ENCODE measurements at regions of chr12 and their contacts with region 1.

Region 1: DNA sequence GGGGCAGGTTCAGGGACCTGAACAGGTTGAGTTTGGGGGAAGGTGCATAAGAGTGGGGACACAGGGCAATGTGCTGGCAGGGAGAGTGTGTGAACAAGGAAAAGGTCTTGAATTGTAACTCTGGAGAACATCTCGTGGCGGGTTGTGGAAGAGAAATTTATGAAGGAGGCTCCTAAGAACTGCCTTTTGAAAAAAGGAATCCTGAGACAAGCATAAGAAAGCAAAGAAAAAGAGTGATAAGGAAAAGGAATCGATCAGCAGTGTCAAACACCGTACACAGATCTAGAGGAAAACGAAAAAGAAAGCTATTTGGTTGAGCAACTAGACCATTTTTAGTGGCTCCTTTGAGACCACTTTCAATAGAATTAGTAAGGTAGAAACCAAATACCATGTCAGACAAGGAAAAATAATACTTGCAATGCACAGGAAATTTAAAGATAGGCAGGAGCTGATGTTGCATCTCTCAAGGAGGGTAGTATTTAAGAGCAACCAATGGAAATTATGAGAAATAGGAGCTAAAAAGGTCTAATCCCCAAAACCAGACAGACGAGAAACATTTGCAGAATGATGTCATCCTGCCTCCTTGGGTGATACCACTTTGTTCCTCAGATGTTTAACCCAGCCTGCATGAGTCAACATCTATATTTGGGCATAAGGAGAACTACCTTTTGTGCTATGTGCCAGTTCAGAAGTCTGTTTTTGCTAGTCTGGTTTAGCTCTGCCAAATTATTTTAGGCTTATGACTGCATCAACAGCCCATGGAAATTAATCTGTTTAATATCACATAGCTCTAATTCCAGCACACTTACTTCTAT is 64.5 kb upstream of the STK38L start:
- DNase-seq: peak; percentile 76
- H3K4me3 ChIP-seq: no peak overlapping the region
- H3K27ac ChIP-seq: no peak overlapping the region
- H3K27me3 ChIP-seq: no peaks in the 10 kb centered on the region
- CTCF ChIP-seq: no peak

Region 2: GRCh38 chr12:27094726-27095125 is 84.9 kb before region 1 on chr12:
- CTCF ChIA-PET with region 1: no interaction called
- POLR2A ChIA-PET with region 1: no interaction called
- DNase-seq: no peak
- H3K4me3 ChIP-seq: no peak overlapping the region
- H3K27ac ChIP-seq: no peak overlapping the region
- H3K27me3 ChIP-seq: no peaks in the 10 kb centered on the region
- CTCF ChIP-seq: no peak

Region 3: DNA sequence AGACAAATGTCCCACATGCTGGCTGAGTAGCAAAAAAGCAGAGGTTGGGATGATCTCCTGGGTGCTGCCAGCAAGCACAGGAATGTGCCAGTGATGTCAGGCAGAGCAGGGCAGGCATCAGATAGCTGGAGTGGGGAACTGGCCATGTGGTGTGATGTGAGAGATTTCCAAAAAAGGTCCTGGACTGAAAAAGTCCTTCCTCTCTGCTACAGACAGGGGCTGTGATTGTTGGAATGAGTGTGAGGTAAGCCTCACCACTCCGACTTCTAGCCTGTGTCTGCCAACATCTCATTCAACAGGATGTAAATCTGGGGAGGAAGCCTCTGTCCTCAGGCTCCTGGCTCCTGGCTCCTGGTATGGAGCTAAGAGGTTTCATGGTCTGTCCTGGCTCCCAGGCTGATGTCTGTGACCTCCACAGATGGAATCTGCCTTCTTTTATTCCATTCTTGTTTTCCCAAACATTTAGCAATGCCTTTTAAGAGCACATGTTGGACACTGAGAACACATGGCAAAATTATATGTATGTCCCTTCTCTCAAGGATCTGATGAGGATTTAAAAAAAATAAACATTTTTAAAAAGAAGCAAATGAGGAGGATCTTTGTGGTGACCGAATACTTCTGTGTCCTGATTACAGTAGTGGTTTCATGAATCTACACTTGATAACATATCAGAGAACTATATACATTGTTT is 14.4 kb after region 1 on chr12:
- CTCF ChIA-PET with region 1: interaction called, 4 read pairs
- POLR2A ChIA-PET with region 1: interaction called, 14 read pairs
- DNase-seq: no peak
- H3K4me3 ChIP-seq: no peak overlapping the region
- H3K27ac ChIP-seq: no peak overlapping the region
- H3K27me3 ChIP-seq: no peaks in the 10 kb centered on the region
- CTCF ChIP-seq: no peak